ENCODE measurements at regions of chr17 and their contacts with region 1.

Region 1: DNA sequence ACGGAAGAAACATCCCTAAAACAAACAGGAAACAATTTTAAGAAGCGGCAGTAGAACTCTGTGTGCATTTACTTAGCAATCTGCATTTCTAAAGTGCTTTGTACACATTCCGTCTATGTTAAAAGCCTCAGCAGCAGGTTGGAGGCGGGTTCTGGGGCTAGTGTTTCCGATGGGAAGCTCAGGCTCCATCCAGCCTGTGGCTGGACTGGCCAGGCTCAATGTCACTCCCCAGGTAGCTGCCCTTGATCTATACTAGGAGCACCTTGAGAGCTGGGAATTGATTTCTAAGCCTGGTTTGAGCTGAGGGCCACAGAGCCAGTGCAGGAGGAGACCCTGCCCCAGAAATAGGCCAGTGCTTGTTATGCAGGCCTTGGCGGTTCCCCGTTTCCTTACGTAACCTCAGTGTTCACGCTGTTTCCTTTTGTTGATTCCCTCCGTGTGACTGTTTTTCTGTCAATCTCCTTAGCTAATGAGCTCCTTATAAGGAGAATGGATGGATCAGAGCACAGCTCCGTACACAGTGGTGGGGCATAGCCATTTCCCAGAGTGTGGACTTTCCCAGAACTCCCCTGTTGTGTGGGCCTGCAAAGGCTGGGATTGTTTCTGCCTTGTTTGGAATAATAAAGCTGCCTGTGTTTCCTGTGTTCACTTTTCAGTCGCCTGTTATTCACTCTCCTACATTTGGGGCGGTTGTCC is 21.4 kb downstream of the ADORA2B start:
- DNase-seq: peak; percentile 62 to 76
- H3K4me3 ChIP-seq: peak overlapping the region; percentile 45; the same call in 1 of the 2 replicates
- H3K27ac ChIP-seq: peak overlapping the region; percentile 92
- H3K4me1 ChIP-seq: peaks cover 78% of the 10 kb centered on the region
- H3K27me3 ChIP-seq: no peaks in the 10 kb centered on the region
- CTCF ChIP-seq: no peak

Region 2: DNA sequence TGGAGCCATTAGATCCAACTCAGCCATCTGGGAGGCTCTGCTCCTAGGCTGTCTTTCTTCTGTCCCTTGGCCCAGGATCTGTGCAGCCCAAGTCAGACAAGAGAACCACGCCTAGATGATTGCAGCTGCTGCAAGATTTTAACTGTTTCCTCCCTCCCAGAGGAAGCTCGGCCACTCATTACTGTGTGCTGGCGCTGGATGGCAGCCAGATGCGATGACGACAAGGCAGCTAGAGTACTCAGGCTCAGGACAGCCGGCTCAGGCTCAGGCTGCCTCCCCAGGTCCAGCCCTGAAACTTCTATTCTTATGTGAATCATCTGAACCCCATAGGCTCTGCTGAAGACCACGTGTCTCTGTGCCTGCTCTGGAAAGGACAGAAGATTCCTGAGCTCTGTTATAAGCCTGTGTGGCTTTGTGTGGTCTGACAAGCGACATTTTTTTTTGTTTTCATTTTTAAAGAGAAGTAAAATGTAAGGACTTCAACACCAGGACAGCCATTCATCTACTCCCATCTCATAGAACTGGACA is 314.7 kb before region 1 on chr17:
- CTCF ChIA-PET with region 1: no interaction called
- POLR2A ChIA-PET with region 1: interaction called, 3 read pairs
- intact Hi-C with region 1: loop called (anchors 2 kb)
- DNase-seq: peak; percentile 96 to 97
- H3K4me3 ChIP-seq: peak overlapping the region; percentile 88
- H3K27ac ChIP-seq: peak overlapping the region; percentile 97
- H3K4me1 ChIP-seq: peaks cover 41% of the 10 kb centered on the region
- H3K27me3 ChIP-seq: no peaks in the 10 kb centered on the region
- CTCF ChIP-seq: no peak

Region 3: GRCh38 chr17:15920758-15921239 is 45.5 kb before region 1 on chr17:
- CTCF ChIA-PET with region 1: no interaction called
- POLR2A ChIA-PET with region 1: no interaction called
- intact Hi-C with region 1: loop called (anchors 2 kb)
- DNase-seq: peak; percentile 96
- H3K4me3 ChIP-seq: no peak overlapping the region
- H3K27ac ChIP-seq: peak overlapping the region; percentile 95
- H3K4me1 ChIP-seq: peaks cover 41% of the 10 kb centered on the region
- H3K27me3 ChIP-seq: no peaks in the 10 kb centered on the region
- CTCF ChIP-seq: no peak

Region 4: DNA sequence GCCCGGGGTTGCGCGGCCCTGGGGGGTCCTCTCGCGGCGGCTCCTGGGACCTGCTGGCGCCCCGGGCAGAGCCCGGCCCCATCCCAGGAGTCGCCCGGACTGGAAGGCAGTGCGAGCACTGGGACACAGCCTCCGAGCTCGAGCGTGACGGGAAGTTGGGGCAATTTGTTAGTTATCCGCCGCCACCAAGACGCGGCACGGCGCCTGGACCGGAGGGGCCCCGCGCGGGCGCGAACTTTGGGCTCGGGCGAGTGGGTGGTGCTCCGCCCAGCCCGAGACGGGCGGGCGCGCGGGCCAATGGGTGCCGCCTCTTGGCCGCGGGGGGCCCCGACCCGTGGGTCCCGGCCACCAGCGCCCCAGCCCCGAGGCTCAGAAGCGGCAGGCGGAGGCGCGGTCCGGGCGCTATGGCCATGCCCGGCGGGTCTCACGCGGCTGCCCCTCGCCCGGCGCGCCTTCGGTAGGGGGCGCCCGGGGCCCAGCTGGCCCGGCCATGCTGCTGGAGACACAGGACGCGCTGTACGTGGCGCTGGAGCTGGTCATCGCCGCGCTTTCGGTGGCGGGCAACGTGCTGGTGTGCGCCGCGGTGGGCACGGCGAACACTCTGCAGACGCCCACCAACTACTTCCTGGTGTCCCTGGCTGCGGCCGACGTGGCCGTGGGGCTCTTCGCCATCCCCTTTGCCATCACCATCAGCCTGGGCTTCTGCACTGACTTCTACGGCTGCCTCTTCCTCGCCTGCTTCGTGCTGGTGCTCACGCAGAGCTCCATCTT is 21.4 kb before region 1 on chr17 and contains the start of gene ADORA2B:
- CTCF ChIA-PET with region 1: no interaction called
- POLR2A ChIA-PET with region 1: interaction called, 10 read pairs
- intact Hi-C with region 1: loop called (anchors 2 kb)
- DNase-seq: peak; percentile 51 to 84
- H3K4me3 ChIP-seq: peak within 1 kb of the TSS; percentile 91
- H3K27ac ChIP-seq: peak within 1 kb of the TSS; percentile 92
- H3K4me1 ChIP-seq: peaks cover 26% of the 10 kb centered on the region
- H3K27me3 ChIP-seq: no peaks in the 10 kb centered on the region
- CTCF ChIP-seq: peak; percentile 30; the same call in 1 of the 2 replicates
- total RNA-seq, gene ADORA2B: 32.6 and 42.7 TPM in 2 replicates

Region 5: DNA sequence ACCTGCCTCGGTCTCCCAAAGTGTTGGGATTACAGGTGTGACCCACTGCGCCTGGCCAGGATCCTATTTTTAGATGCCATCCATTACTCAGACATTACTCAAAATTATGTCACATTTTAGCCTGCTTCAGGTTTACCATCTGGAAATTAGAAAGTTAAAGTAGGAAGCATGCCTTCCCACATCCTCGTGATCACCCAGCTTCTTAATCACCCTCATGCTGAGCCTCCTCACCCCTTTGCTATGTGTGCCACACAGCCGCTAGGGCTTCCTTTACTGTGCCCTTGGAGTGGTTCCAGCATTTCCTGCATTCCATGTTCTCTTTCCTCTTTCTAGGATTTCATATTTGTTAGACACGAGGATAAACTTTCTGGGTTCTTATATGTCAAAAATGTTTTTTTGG is 12.1 kb before region 1 on chr17:
- CTCF ChIA-PET with region 1: interaction called, 16 read pairs
- POLR2A ChIA-PET with region 1: interaction called, 6 read pairs
- intact Hi-C with region 1: loop called (anchors 1 kb)
- DNase-seq: peak; percentile 81 to 91
- H3K4me3 ChIP-seq: no peak overlapping the region
- H3K27ac ChIP-seq: peak overlapping the region; percentile 71
- H3K4me1 ChIP-seq: peaks cover 48% of the 10 kb centered on the region
- H3K27me3 ChIP-seq: no peaks in the 10 kb centered on the region
- CTCF ChIP-seq: no peak

Region 6: DNA sequence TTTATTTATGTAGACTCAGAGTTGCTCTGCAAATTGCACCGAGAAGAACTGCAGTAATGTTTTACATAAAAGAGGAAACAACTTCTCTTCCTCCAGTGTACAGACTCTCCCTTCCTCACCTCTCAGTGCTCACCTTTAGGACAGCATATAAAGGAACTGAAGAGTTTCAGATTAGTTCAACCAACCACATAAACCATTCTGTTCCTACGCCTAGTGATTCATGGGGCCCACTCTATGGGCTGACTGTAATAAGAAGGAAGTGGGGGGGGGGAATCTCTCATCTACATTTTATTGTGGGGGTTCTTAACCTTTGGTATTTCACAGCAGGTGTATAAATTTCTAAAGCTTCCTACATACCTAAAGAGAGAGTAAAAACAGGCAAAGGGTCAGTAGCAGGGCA is 14.9 kb after region 1 on chr17:
- CTCF ChIA-PET with region 1: no interaction called
- POLR2A ChIA-PET with region 1: no interaction called
- intact Hi-C with region 1: loop called (anchors 1 kb)
- DNase-seq: peak in 1 of 2 experiments; percentile 93
- H3K4me3 ChIP-seq: peak overlapping the region; percentile 10; the same call in 1 of the 2 replicates
- H3K27ac ChIP-seq: peak overlapping the region; percentile 93
- H3K4me1 ChIP-seq: peaks cover 42% of the 10 kb centered on the region
- H3K27me3 ChIP-seq: no peaks in the 10 kb centered on the region
- CTCF ChIP-seq: no peak

Region 7: GRCh38 chr17:16158714-16159113 is 192.4 kb after region 1 on chr17:
- CTCF ChIA-PET with region 1: no interaction called
- POLR2A ChIA-PET with region 1: no interaction called
- intact Hi-C with region 1: no loop called
- DNase-seq: no peak
- H3K4me3 ChIP-seq: no peak overlapping the region
- H3K27ac ChIP-seq: no peak overlapping the region
- H3K4me1 ChIP-seq: no peaks in the 10 kb centered on the region
- H3K27me3 ChIP-seq: no peaks in the 10 kb centered on the region
- CTCF ChIP-seq: no peak

Measured in PC-9 (cell line).